ENCODE measurements at regions of chr1 and their contacts with region 1.

Region 1: DNA sequence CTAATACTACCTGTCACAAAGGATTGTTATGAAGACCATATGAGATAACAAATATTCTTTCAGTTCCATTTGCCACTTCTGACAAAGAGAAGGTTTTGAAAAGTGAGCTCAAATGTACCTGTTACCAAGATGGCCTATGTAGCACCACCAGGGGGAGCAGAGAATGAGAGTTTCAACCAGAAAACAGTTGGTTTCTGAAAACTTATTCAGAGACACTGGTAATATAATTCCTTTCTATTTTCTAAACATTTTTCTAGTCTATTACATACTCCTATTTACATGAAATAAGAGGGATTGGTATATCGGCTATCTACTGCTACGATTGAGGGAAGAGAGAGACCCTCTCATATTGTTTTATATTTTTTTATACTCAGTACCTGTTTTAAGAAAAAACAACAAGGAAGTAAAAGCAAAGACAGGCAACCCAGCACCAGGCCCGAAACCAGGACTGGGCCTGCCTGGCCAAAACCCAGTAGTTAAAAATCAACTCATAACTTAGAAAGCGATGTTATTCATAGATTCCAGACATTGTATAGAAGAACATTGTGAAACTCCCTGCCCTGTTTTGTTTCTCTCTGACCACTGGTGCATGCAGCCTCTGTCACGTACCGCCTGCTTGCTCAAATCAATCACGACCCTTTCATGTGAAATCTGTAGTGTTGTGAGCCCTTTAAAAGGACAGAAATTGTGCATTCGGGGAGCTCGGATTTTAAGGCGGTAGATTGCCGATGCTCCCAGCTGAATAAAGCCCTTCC is 48.3 kb downstream of the IL23R start:
- DNase-seq: peak; percentile 79
- ATAC-seq: peak; percentile 26
- H3K4me3 Mint-ChIP-seq: no peak overlapping the region
- H3K27ac Mint-ChIP-seq: no peak overlapping the region
- H3K4me1 Mint-ChIP-seq: peaks cover 39% of the 10 kb centered on the region
- H3K27me3 Mint-ChIP-seq: no peaks in the 10 kb centered on the region
- CTCF ChIP-seq: peak; percentile 58

Region 2: DNA sequence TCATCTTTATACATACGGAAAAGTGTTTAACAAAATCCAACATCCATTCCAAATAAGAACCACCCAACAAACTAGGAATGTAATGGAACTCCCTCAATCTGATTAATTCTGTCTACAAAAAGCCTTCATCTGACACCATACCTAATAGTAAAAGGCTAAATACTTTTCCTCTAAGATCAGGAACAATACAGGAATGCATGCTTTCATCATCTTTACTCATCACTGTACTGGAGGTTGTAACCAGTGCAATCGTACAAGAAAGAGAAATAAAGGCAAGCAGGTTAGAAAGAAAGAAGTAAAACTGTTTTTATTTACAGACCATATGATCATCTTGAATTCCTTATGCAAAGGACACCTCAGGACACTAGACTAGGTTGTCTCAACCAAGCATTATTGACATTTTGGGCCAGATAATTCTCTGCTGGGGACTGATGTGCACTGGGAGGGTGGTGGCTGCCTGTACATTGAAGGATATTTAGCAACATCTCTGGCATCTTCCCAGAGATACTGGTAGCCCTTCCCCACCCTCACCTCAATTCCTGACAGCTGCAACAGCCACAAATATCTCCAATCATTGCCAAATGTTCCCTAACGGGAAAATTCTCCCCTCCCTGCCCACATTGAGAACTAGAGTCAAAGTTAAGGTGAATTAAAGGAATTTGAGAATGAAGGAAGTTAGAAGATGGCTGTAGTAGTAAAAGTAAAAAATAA is 382.9 kb before region 1 on chr1:
- CTCF ChIA-PET with region 1: no interaction called
- POLR2A ChIA-PET with region 1: no interaction called
- intact Hi-C with region 1: no loop called
- DNase-seq: no peak
- ATAC-seq: no peak
- H3K4me3 Mint-ChIP-seq: no peak overlapping the region
- H3K27ac Mint-ChIP-seq: no peak overlapping the region
- H3K4me1 Mint-ChIP-seq: no peaks in the 10 kb centered on the region
- H3K27me3 Mint-ChIP-seq: no peaks in the 10 kb centered on the region
- CTCF ChIP-seq: no peak

Region 3: DNA sequence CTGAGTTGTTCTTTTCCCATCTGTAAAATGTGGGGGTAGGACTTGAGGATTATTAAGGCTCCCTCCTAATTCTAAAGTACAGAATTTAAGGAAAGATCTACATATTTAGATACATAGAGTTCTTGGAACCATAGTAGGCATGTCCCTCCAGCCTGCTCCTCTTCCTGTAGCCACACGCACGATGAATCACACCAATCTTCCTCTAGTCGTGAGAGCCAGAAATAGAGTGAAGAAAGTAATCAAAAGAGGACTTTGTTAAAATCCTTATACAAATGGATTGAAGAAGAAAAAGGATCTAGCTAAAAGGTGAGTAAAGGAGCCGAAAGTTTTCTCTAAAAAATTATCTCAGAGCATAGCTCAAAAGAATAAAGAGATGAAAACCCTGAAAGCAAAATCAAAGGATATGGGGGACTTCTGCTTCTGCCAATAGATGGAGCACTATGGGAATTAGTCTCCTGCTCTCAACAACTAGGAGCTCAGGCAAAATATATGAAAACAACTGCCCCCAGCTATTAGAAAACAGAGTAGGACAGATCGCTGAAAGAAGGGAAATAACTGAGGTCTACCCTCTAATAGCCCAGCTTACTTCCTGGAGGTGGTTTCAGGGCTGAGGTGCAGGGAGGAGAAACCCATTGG is 88.4 kb before region 1 on chr1:
- CTCF ChIA-PET with region 1: interaction called, 13 read pairs
- POLR2A ChIA-PET with region 1: interaction called, 3 read pairs
- intact Hi-C with region 1: no loop called
- DNase-seq: no peak
- ATAC-seq: no peak
- H3K4me3 Mint-ChIP-seq: no peak overlapping the region
- H3K27ac Mint-ChIP-seq: no peak overlapping the region
- H3K4me1 Mint-ChIP-seq: peaks cover 4% of the 10 kb centered on the region
- H3K27me3 Mint-ChIP-seq: no peaks in the 10 kb centered on the region
- CTCF ChIP-seq: no peak

Region 4: GRCh38 chr1:67149179-67149770 is 65.3 kb before region 1 on chr1:
- CTCF ChIA-PET with region 1: interaction called, 200 read pairs
- POLR2A ChIA-PET with region 1: no interaction called
- intact Hi-C with region 1: loop called (anchors 5 kb)
- DNase-seq: peak; percentile 79
- ATAC-seq: peak; percentile 91
- H3K4me3 Mint-ChIP-seq: no peak overlapping the region
- H3K27ac Mint-ChIP-seq: peak overlapping the region; percentile 44
- H3K4me1 Mint-ChIP-seq: peaks cover 36% of the 10 kb centered on the region
- H3K27me3 Mint-ChIP-seq: peaks cover 21% of the 10 kb centered on the region
- CTCF ChIP-seq: peak; percentile 67

Region 5: DNA sequence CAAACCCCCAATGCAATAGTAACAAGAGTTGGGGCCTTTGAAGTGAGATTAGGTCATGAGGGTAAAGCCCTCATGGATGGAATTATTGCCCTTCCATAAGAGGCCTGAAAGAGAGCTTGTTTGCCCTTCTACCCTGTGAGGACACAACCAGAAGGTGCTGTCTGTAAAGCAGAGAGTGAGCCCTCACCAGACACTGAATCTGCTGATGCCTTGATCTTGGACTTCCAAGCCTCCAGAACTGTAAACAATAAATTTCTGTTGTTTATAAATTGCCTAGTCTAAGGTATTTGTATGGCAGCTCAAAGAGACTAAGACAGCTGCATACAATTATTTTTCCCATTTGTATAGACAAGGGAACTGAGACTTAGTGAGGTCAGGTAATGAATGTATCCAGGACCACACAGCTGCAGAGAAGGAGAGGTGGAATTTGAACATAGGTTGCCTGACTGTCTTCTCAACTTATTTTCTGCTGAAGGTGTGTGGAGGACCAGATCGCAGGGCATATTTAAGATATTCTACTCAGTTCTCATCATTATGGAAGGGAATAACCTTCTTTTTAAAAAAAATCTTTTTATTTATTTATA is 29.7 kb before region 1 on chr1:
- CTCF ChIA-PET with region 1: interaction called, 35 read pairs
- POLR2A ChIA-PET with region 1: no interaction called
- intact Hi-C with region 1: no loop called
- DNase-seq: no peak
- ATAC-seq: no peak
- H3K4me3 Mint-ChIP-seq: no peak overlapping the region
- H3K27ac Mint-ChIP-seq: no peak overlapping the region
- H3K4me1 Mint-ChIP-seq: peaks cover 1% of the 10 kb centered on the region
- H3K27me3 Mint-ChIP-seq: peaks cover under 1% of the 10 kb centered on the region
- CTCF ChIP-seq: no peak

Region 6: DNA sequence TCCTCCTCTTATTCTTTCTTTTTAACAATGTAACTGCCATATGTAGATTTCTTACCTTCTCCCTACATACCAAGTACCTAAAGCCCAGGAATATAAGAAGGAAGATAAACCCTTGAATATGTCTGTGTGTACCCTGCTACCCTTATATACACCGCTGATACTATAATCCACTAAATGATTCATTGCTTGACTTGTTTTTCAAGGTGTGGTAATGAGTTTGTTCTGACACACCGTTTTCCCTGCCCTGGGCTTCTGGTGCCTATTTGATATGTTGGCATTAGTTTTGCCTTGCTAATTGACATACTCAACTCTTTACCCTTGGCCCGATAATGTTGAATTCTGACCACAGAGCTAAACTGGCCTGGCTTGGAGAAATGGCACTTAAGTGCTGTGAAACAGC is 15.9 kb after region 1 on chr1:
- CTCF ChIA-PET with region 1: interaction called, 67 read pairs
- POLR2A ChIA-PET with region 1: no interaction called
- intact Hi-C with region 1: no loop called
- DNase-seq: no peak
- ATAC-seq: no peak
- H3K4me3 Mint-ChIP-seq: no peak overlapping the region
- H3K27ac Mint-ChIP-seq: no peak overlapping the region
- H3K4me1 Mint-ChIP-seq: peaks cover 9% of the 10 kb centered on the region
- H3K27me3 Mint-ChIP-seq: peaks cover 5% of the 10 kb centered on the region
- CTCF ChIP-seq: no peak

Region 7: DNA sequence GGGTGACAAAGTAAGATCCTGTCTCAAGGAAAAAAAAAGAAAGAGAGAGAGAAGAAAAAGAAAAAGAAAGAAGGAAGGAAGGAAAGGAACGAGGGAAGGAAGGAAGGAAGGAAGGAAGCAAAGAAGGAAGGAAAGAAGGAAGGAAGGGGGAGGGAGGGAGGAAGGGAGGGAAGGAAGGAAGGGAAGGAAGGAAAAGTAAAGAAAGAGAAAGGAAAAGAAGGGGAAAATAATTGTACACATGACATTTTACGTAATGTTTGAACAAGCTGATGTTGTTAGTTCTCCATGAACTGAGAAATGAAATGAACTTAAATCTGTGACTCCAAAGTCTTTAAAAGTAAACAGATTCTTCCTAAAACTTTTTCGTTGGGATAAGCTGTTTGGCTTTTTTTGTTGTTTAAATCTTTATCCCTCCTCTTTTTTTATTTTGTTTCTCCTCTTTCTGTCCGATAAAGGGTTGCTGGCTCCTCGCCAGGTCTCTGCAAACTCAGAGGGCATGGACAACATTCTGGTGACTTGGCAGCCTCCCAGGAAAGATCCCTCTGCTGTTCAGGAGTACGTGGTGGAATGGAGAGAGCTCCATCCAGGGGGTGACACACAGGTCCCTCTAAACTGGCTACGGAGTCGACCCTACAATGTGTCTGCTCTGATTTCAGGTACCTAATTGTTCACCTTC is 152.9 kb after region 1 on chr1:
- CTCF ChIA-PET with region 1: no interaction called
- POLR2A ChIA-PET with region 1: no interaction called
- intact Hi-C with region 1: no loop called
- DNase-seq: no peak
- ATAC-seq: no peak
- H3K4me3 Mint-ChIP-seq: no peak overlapping the region
- H3K27ac Mint-ChIP-seq: no peak overlapping the region
- H3K4me1 Mint-ChIP-seq: peaks cover 10% of the 10 kb centered on the region
- H3K27me3 Mint-ChIP-seq: no peaks in the 10 kb centered on the region
- CTCF ChIP-seq: no peak

Region 8: GRCh38 chr1:67430352-67431155 is 216.0 kb after region 1 on chr1 and contains the start of gene SERBP1:
- CTCF ChIA-PET with region 1: interaction called, 12 read pairs
- POLR2A ChIA-PET with region 1: no interaction called
- intact Hi-C with region 1: no loop called
- DNase-seq: peak; percentile 98
- ATAC-seq: peak; percentile 92
- H3K4me3 Mint-ChIP-seq: peak within 1 kb of the TSS; percentile 84
- H3K27ac Mint-ChIP-seq: peak within 1 kb of the TSS; percentile 98
- H3K4me1 Mint-ChIP-seq: peaks cover 40% of the 10 kb centered on the region
- H3K27me3 Mint-ChIP-seq: no peaks in the 10 kb centered on the region
- CTCF ChIP-seq: no peak
- total RNA-seq, gene SERBP1: 476 to 491 TPM

Region 9: GRCh38 chr1:67540733-67541125 is 326.1 kb after region 1 on chr1:
- CTCF ChIA-PET with region 1: no interaction called
- POLR2A ChIA-PET with region 1: no interaction called
- intact Hi-C with region 1: no loop called
- DNase-seq: no peak
- ATAC-seq: no peak
- H3K4me3 Mint-ChIP-seq: no peak overlapping the region
- H3K27ac Mint-ChIP-seq: no peak overlapping the region
- H3K4me1 Mint-ChIP-seq: no peaks in the 10 kb centered on the region
- H3K27me3 Mint-ChIP-seq: no peaks in the 10 kb centered on the region
- CTCF ChIP-seq: no peak

Measured in activated CD8-positive, alpha-beta T cell treated with anti-CD3 and anti-CD28 coated beads for 36 hours (primary cell).